PC-3 (cell line): ENCODE measurements at regions of chr15 and their contacts with region 1.

Region 1: DNA sequence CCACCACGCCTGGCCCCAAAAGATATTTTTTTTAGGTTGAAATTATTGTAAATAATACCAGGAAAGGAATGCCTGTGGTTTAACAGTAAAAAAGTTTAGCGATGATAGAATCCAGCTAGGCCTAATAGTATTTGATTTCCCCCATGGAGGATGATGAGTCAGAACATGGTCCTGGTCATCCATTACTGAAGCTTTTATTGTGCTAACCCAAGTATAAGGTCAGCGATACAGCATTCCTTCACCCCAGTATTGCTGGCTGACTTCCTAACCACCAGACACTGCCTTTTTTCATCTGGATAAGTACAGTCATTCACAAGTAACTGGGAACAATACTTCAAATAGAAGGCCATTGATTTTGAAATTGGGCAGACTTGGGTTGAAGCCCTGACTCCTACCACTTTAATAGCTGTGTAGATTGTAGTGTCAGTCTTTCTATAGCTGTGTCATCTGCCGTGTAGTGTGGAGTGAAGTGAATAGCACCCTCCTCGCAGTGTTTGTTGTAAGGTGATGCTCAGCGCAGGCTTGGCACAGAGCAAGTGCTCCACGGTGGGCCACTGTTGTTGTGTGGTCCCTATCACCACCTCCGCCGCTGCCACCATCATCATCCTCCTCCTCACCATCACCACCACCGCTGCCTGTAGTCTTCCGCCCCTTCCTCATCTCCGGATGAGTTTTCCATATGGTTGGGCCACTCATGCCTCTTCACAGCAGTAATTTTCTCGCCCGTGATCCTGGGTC is 436.0 kb upstream of the TPM1 start:
- DNase-seq: peak; percentile 94
- ATAC-seq: peak; percentile 89
- H3K4me3 ChIP-seq: no peak overlapping the region
- H3K27ac ChIP-seq: peak overlapping the region; percentile 62
- H3K4me1 ChIP-seq: peaks cover 52% of the 10 kb centered on the region
- H3K27me3 ChIP-seq: no peaks in the 10 kb centered on the region
- CTCF ChIP-seq: no peak

Region 2: GRCh38 chr15:62087671-62088352 is 518.7 kb before region 1 on chr15:
- CTCF ChIA-PET with region 1: interaction called, 16 read pairs
- POLR2A ChIA-PET with region 1: no interaction called
- intact Hi-C with region 1: no loop called
- DNase-seq: peak; percentile 49
- ATAC-seq: peak; percentile 54
- H3K4me3 ChIP-seq: no peak overlapping the region
- H3K27ac ChIP-seq: peak overlapping the region; percentile 41
- H3K4me1 ChIP-seq: peaks cover 11% of the 10 kb centered on the region
- H3K27me3 ChIP-seq: no peaks in the 10 kb centered on the region
- CTCF ChIP-seq: no peak

Region 3: GRCh38 chr15:62453981-62454380 is 152.6 kb before region 1 on chr15:
- CTCF ChIA-PET with region 1: no interaction called
- POLR2A ChIA-PET with region 1: no interaction called
- intact Hi-C with region 1: loop called (anchors 5 kb)
- DNase-seq: peak; percentile 71
- ATAC-seq: peak; percentile 62
- H3K4me3 ChIP-seq: peak overlapping the region; percentile 53
- H3K27ac ChIP-seq: peak overlapping the region; percentile 82
- H3K4me1 ChIP-seq: peaks cover 38% of the 10 kb centered on the region
- H3K27me3 ChIP-seq: no peaks in the 10 kb centered on the region
- CTCF ChIP-seq: no peak

Region 4: DNA sequence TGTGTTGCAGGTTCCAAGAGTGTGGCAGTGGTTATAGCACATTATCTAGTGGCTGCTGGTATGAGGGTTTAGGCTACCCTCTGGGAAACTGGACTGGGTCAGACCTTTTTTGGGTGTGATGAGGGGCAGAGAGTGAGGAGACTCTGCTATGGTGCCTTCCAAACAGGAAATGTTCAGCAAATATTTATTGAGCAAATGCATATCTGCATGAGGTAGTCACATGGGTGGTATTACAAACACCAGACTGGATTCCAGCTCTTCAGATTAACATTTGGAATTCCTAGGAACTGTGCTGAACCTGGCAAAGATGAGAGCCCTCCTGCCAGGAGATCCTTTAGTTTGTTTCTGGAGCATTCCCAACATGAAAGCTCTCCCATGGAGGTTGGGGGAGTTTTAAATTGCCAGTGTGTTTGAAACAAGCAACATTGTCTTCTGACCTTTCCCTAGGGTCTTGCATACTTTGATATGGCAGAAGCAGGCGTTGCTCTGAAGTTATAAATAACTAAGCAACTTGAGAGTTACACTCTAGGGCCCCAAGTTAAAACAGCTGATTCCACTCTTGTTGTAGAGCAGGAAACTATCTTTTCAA is 100.2 kb before region 1 on chr15:
- CTCF ChIA-PET with region 1: no interaction called
- POLR2A ChIA-PET with region 1: no interaction called
- intact Hi-C with region 1: no loop called
- DNase-seq: peak; percentile 43
- ATAC-seq: peak; percentile 66
- H3K4me3 ChIP-seq: no peak overlapping the region
- H3K27ac ChIP-seq: no peak overlapping the region
- H3K4me1 ChIP-seq: peaks cover 11% of the 10 kb centered on the region
- H3K27me3 ChIP-seq: no peaks in the 10 kb centered on the region
- CTCF ChIP-seq: no peak

Region 5: GRCh38 chr15:62739082-62739481 is 132.5 kb after region 1 on chr15:
- CTCF ChIA-PET with region 1: no interaction called
- POLR2A ChIA-PET with region 1: no interaction called
- intact Hi-C with region 1: no loop called
- DNase-seq: peak; percentile 93
- ATAC-seq: peak; percentile 98
- H3K4me3 ChIP-seq: 0 out of 2 replicates have a peak overlapping the region, but pooled peaks have one; percentile 20
- H3K27ac ChIP-seq: peak overlapping the region; percentile 95
- H3K4me1 ChIP-seq: peaks cover 45% of the 10 kb centered on the region
- H3K27me3 ChIP-seq: no peaks in the 10 kb centered on the region
- CTCF ChIP-seq: no peak

Region 6: DNA sequence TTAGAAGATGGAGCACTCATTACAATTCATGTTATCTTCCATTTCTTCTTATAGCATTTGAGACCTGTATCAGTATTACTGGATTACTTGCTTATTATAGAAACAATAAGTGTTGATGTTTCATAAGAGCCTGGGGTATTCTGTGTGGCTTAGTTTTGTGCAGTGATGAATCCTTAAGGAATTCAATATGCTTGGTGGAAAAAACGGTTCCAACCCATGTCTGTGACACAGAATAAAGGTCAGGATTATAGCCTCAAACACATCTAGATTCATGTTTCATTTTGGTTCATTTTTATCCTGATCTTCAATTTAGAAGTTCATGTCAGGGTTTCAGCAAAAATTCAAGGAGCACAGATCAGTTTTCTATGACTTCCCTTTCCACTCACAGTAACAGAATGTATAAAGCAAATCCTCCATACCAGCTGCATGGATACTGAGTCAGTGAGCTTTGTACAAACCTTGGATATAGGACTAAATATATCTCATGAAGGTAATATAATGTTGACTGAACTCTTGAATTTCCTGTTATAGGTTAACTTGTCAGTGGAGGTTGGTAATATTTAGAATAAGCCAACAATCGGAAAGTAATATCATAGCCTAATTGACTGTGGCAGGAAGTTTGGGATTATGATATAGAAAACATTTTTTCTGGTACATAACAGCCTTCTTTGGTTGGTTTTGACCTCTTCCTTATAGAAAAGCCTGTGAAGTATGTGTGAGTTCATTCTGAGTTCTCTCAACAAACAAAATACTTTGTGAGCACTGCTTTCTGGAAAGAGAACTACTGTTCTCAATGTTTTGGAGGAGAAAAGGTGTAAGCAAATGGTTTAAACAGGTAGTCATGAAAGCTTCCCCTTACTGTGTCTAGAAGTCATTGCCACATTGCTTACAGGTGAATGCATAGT is 217.8 kb after region 1 on chr15:
- CTCF ChIA-PET with region 1: no interaction called
- POLR2A ChIA-PET with region 1: no interaction called
- intact Hi-C with region 1: no loop called
- DNase-seq: peak; percentile 51
- ATAC-seq: peak; percentile 31; the same call in 1 of the 2 replicates
- H3K4me3 ChIP-seq: no peak overlapping the region
- H3K27ac ChIP-seq: no peak overlapping the region
- H3K4me1 ChIP-seq: peaks cover 17% of the 10 kb centered on the region; the same call in 1 of the 2 replicates
- H3K27me3 ChIP-seq: no peaks in the 10 kb centered on the region
- CTCF ChIP-seq: no peak